Body of pancreas (tissue), 4 donors: ENCODE measurements at regions of chr4 and their contacts with region 1.

Region 1: DNA sequence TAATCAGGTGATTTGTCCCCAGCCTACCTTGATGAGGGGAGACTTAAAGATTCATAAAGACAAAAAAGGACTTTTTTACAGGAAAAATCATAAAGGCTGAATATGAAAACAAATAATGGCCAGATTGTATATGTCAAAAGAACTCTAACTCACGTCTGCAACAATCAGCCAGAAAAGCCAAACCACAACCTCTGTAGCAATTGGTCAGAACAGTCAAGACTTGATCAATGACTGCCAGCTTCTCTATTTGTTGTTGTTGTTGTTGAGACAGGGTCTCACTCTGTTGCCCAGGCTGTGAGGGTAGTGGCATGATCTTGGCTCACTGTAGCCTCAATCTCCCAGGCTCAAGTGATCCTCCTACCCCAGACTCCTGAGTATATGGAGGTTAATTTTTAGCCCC is 35.9 kb upstream of the PPA2 start:
- DNase-seq: no peak
- ATAC-seq: no peak
- H3K4me3 ChIP-seq: no peak overlapping the region
- H3K27ac ChIP-seq: no peak overlapping the region
- H3K4me1 ChIP-seq: no peaks in the 10 kb centered on the region
- H3K27me3 ChIP-seq: no peaks in the 10 kb centered on the region
- CTCF ChIP-seq: no peak
- POLR2A ChIP-seq: no peak

Region 2: DNA sequence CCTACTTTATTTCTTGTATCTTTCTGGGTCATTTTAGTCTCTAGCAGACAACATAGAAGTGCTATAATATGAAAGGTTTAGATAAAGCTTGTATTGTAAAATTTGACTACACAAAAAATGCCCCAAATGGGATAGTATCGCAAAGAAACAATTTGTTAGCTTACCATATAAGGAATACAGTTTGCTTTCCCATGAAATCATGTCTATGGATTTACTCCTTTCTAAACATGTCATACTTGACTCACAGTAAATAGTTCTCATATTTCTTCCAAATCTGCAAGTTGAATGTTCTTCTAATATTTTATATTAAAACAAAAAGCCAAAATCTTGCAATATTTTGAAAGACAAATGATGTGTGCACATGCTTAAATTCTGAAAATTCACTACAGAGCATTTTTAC is 139.7 kb before region 1 on chr4:
- intact Hi-C with region 1: no loop called
- DNase-seq: no peak
- ATAC-seq: no peak
- H3K4me3 ChIP-seq: no peak overlapping the region
- H3K27ac ChIP-seq: no peak overlapping the region
- H3K4me1 ChIP-seq: no peaks in the 10 kb centered on the region
- H3K27me3 ChIP-seq: no peaks in the 10 kb centered on the region
- CTCF ChIP-seq: no peak
- POLR2A ChIP-seq: no peak

Region 3: DNA sequence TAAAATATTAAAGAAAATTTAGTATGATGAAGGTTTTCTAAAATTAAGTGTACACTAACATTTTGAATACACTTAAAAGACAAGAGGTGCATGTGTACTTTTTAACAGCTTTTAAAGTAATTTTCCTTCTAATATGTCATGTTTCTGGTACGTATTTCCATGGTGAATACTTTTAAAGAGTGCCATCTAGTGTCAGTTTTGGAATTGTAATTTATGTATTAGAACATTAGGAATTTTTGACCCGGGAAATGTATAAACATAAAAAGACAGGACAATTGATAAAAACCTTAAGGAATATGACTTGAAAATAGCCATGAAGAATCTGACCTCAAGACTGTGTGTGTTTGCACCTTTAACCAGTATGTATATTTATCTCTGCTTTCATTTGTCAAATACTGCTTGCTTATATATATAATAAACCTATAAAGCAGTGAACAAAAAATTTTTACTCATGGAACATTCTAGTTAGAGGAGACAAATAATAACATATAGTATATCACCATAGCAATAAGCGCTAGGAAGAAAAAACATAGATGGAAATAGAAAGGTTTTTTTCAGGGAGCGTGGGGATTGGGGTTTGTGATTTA is 206.1 kb after region 1 on chr4:
- intact Hi-C with region 1: loop called (anchors 10 kb)
- DNase-seq: no peak
- ATAC-seq: peak; percentile 69
- H3K4me3 ChIP-seq: no peak overlapping the region
- H3K27ac ChIP-seq: no peak overlapping the region
- H3K4me1 ChIP-seq: peaks cover 6% of the 10 kb centered on the region
- H3K27me3 ChIP-seq: no peaks in the 10 kb centered on the region
- CTCF ChIP-seq: peak; percentile 34 to 71 (median 62)
- POLR2A ChIP-seq: no peak

Region 4: DNA sequence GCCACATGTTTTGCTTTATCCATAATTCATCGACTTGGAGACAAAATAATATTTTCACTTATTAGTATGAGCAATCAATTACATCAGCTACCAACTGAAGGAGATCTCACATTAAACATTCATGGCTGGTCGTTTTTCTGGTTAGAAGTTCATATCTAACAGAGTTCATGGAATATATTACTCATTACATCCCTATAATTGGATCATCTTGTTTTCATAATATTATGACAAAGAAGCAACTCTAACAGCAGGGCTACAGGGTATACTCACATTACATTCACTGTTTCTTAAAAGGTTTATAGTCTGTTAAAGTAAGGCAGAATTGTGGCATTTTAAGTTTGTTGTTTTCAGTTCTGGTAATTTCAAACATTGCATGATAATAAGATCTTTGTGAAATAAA is 231.8 kb after region 1 on chr4:
- intact Hi-C with region 1: no loop called
- DNase-seq: no peak
- ATAC-seq: no peak
- H3K4me3 ChIP-seq: no peak overlapping the region
- H3K27ac ChIP-seq: no peak overlapping the region
- H3K4me1 ChIP-seq: no peaks in the 10 kb centered on the region
- H3K27me3 ChIP-seq: no peaks in the 10 kb centered on the region
- CTCF ChIP-seq: no peak
- POLR2A ChIP-seq: no peak